Pancreas (tissue), 10 donors: ENCODE measurements at regions of chr13 and their contacts with region 1.

Region 1: DNA sequence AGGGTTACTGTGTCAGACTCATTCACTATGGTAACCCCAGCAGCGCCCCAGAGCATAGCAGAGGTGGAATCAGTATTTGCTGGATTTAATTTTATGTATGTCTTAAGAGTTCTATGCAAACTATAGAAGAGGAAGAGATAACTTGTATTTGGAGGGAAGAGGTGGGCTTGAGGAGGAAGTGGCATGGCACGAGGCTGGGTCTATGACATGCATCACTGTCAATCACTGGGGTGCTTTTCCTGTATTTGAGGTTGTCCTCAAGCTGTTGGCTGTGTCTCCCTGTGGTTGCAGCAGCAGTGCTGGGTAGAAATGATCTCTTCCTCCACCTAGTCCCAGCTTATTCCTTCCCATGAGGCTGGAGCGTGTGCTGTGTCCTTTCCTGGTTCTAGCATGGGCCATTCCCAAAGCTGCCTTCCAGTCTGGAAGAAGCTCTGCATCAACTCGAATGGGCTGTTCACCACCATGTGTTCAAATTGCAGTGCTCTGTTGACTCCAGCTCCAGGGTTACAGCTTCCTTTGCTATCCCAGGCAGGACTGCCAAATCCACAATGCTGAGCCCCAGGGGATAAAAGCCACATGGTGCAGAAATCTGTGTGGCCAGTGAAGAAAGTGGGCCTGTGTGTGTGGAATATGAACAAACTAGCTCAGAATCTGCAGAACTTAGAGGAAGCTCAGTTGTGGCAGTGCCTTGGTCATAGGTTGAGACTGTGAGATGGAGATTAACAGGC is 73.1 kb upstream of the MTIF3 start:
- DNase-seq: no peak
- ATAC-seq: no peak
- H3K4me3 ChIP-seq: no peak overlapping the region
- H3K27ac ChIP-seq: no peak overlapping the region
- H3K4me1 ChIP-seq: no peaks in the 10 kb centered on the region
- H3K27me3 ChIP-seq: no peaks in the 10 kb centered on the region
- CTCF ChIP-seq: no peak

Region 2: DNA sequence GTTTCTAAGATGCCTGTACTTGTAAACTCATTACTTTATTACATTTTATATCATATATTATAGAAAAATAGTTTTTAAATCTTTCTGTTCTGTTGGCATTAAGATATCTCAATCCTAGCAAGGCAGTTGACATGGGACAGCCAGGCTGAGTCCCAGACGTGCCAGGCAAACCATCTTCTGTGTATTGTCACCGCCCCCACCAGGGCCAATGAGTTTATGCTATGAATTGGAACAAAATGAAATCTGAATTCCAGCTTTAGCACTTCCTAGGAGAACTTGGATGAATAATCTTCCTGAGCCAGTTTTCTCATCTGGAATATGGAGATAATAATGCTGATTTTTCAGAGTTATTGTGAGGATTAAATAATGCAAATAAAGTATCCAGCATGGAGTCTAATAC is 188.9 kb after region 1 on chr13:
- intact Hi-C with region 1: loop called in 1 of 3 experiments (anchors 10 kb)
- DNase-seq: peak in 4 of 6 donors; percentile 25 to 41 (median 30)
- ATAC-seq: peak; percentile 58 to 89 (median 80)
- H3K4me3 ChIP-seq: no peak overlapping the region
- H3K27ac ChIP-seq: no peak overlapping the region
- H3K4me1 ChIP-seq: no peaks in the 10 kb centered on the region
- H3K27me3 ChIP-seq: no peaks in the 10 kb centered on the region
- CTCF ChIP-seq: peak in 1 of 4 donors; percentile 23